ENCODE measurements at regions of chr3 and their contacts with region 1.

Region 1: DNA sequence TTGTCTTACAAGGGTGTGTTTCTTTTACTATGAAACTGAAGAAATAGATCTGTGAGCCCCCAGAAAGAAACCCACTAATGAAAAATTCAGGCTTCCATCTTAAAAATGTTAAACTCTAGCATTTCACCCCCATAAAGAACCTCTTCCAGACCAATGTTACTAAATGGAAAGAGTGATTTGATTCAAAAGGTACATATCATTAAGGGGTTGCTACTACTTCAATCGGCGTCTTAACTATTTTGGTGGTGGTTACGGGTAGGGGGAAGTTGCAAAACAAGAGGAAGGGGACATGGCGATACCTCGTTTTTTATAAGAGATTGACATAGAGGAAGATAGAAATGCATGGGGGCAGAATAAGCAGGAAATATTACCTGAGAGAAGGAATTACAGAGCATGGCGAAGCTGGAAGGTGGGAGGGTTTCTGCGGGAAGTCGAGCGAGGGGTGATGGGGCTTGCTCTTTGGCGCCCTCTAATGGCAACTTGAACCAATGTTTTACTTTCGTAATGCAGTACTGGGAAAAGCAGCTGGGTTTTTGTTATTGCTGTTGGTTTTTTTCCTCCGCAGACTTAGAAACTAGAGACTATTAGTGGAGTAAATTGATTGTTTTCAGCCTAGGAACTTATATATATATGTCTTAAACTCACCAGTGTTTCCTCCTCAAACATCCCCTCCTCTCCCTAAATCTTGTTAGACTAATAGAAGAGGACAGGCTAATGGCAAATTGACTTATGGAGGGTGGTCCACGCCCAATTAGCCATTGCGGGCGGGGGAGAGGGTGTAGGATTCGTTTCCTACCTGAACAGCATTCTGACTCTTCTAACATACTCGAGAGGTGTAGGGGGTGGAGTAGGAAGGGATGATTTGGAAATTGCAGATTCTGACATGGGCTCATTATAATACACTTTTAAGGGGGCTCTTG is 11.3 kb upstream of the SOX2 start:
- DNase-seq: peak; percentile 21
- ATAC-seq: peak; percentile 83
- H3K4me3 ChIP-seq: no peak overlapping the region
- H3K27ac ChIP-seq: no peak overlapping the region
- H3K4me1 ChIP-seq: no peaks in the 10 kb centered on the region
- H3K27me3 ChIP-seq: peaks cover 10 to 25% of the 10 kb centered on the region in 2 experiments
- CTCF ChIP-seq: peak; percentile 82 to 86 (median 85)
- EP300 ChIP-seq: no peak
- POLR2A ChIP-seq: no peak
- RAD21 ChIP-seq: peak; percentile 49

Region 2: DNA sequence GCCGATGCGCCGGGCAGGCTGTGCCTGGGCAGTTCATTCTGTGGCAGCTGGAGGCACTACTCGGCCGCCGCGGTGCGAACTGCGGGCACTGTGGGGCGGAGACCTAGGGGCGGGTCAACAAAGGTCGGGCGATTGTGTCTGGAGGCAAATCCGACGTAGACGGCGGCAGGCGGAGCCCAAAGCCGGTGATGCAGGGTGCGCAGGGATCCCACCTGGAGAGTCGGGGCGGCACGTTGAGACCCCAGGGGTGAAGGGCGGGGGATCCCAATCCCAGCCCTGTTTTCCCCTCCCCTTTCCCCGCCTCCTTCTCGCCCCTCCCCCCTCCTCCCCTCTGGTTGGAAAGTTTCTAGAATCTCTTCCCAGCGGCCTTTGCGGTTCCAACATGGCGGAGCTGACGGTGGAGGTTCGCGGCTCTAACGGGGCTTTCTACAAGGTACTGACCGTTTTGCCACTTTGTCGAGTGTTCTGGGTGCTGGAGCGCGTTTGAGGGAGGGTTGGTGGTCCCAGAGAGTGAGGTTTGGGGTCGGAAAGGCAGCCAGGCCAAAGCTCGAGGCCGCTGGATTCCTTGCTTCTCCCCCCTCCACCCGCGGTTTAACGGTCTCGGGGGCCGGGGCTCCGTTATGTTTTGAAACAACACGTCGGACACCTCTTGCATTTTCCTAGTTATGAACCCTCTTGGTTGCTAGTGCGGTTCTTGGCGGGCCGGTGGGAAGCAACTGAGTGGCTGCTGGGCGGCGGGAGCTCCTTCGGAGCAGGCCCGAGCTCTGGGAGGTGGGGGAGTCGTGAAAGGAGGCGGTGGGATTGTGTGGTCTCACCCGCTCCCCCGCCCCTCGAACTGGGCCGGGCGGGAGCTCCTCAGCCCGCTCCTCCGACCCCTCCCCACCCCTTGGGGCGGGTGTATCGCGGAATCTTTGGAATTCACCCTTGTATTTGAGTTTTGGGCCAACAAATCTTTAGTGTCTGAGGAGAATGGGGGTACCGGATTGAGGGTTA is 787.8 kb before region 1 on chr3 and contains the start of gene FXR1:
- CTCF ChIA-PET with region 1: no interaction called
- POLR2A ChIA-PET with region 1: no interaction called
- RAD21 ChIA-PET with region 1: no interaction called
- SMC1A ChIA-PET with region 1: no interaction called
- in situ Hi-C with region 1: no loop called
- intact Hi-C with region 1: loop called (anchors 10 kb)
- DNase-seq: peak; percentile 66
- ATAC-seq: peak; percentile 99
- H3K4me3 ChIP-seq: peak within 1 kb of the TSS; percentile 97
- H3K27ac ChIP-seq: peak within 1 kb of the TSS; percentile 97
- H3K4me1 ChIP-seq: no peaks in the 10 kb centered on the region
- H3K27me3 ChIP-seq: no peaks in the 10 kb centered on the region
- CTCF ChIP-seq: peak; percentile 72 to 82 (median 80)
- EP300 ChIP-seq: no peak
- POLR2A ChIP-seq: peak; percentile 89
- RAD21 ChIP-seq: peak; percentile 44
- polyA plus RNA-seq, gene FXR1: 46.0 to 62.9 TPM

Region 3: GRCh38 chr3:181326637-181327223 is 373.7 kb before region 1 on chr3:
- CTCF ChIA-PET with region 1: interaction called, 14 read pairs
- POLR2A ChIA-PET with region 1: no interaction called
- RAD21 ChIA-PET with region 1: interaction called, 12 read pairs
- SMC1A ChIA-PET with region 1: interaction called, 6 read pairs
- in situ Hi-C with region 1: loop called (anchors 10 kb)
- intact Hi-C with region 1: loop called (anchors 1 kb)
- DNase-seq: no peak
- ATAC-seq: peak; percentile 77
- H3K4me3 ChIP-seq: no peak overlapping the region
- H3K27ac ChIP-seq: no peak overlapping the region
- H3K4me1 ChIP-seq: no peaks in the 10 kb centered on the region
- H3K27me3 ChIP-seq: no peaks in the 10 kb centered on the region
- CTCF ChIP-seq: peak; percentile 59 to 65 (median 64)
- EP300 ChIP-seq: no peak
- POLR2A ChIP-seq: no peak
- RAD21 ChIP-seq: peak; percentile 72

Region 4: GRCh38 chr3:181689546-181689945 is 10.9 kb before region 1 on chr3:
- CTCF ChIA-PET with region 1: interaction called, 36 read pairs
- POLR2A ChIA-PET with region 1: no interaction called
- RAD21 ChIA-PET with region 1: no interaction called
- SMC1A ChIA-PET with region 1: interaction called, 3 read pairs
- in situ Hi-C with region 1: no loop called
- intact Hi-C with region 1: no loop called
- DNase-seq: no peak
- ATAC-seq: no peak
- H3K4me3 ChIP-seq: no peak overlapping the region
- H3K27ac ChIP-seq: no peak overlapping the region
- H3K4me1 ChIP-seq: no peaks in the 10 kb centered on the region
- H3K27me3 ChIP-seq: no peaks in the 10 kb centered on the region
- CTCF ChIP-seq: no peak
- EP300 ChIP-seq: no peak
- POLR2A ChIP-seq: no peak
- RAD21 ChIP-seq: no peak

Region 5: GRCh38 chr3:181773921-181774320 is 73.5 kb after region 1 on chr3:
- CTCF ChIA-PET with region 1: no interaction called
- POLR2A ChIA-PET with region 1: no interaction called
- RAD21 ChIA-PET with region 1: no interaction called
- SMC1A ChIA-PET with region 1: no interaction called
- in situ Hi-C with region 1: no loop called
- intact Hi-C with region 1: no loop called
- DNase-seq: no peak
- ATAC-seq: no peak
- H3K4me3 ChIP-seq: no peak overlapping the region
- H3K27ac ChIP-seq: no peak overlapping the region
- H3K4me1 ChIP-seq: no peaks in the 10 kb centered on the region
- H3K27me3 ChIP-seq: no peaks in the 10 kb centered on the region
- CTCF ChIP-seq: no peak
- EP300 ChIP-seq: no peak
- POLR2A ChIP-seq: no peak
- RAD21 ChIP-seq: no peak

Region 6: DNA sequence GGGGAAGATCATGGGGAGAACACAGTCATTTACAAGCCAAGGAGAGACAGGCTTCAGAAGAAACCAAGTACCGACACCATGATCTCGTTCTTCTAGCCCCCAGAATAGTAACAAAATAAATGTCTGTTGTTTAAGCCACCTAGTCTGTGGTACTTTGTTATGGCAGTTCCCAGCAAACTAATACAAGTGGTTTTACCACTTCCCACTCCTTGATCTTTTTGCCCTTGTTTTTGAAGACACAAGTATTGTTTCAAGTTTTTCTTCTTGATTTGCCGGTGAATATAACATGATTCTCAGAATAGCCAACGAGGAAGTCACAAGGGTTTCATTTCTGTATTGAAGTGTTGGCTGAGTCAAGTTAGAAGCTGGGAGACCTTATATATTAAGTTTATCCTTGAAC is 231.6 kb after region 1 on chr3:
- CTCF ChIA-PET with region 1: no interaction called
- POLR2A ChIA-PET with region 1: no interaction called
- RAD21 ChIA-PET with region 1: no interaction called
- SMC1A ChIA-PET with region 1: no interaction called
- in situ Hi-C with region 1: no loop called
- intact Hi-C with region 1: loop called (anchors 10 kb)
- DNase-seq: peak; percentile 61
- ATAC-seq: peak; percentile 74
- H3K4me3 ChIP-seq: 0 out of 2 replicates have a peak overlapping the region, but pooled peaks have one; percentile 1
- H3K27ac ChIP-seq: peak overlapping the region; percentile 62
- H3K4me1 ChIP-seq: peaks cover 29% of the 10 kb centered on the region
- H3K27me3 ChIP-seq: no peaks in the 10 kb centered on the region
- CTCF ChIP-seq: no peak
- EP300 ChIP-seq: peak in 1 of 2 experiments; percentile 29; a peak in 1 of 4 replicates
- POLR2A ChIP-seq: no peak
- RAD21 ChIP-seq: no peak

Region 7: GRCh38 chr3:182136088-182136487 is 435.7 kb after region 1 on chr3:
- CTCF ChIA-PET with region 1: no interaction called
- POLR2A ChIA-PET with region 1: no interaction called
- RAD21 ChIA-PET with region 1: no interaction called
- SMC1A ChIA-PET with region 1: no interaction called
- in situ Hi-C with region 1: no loop called
- intact Hi-C with region 1: no loop called
- DNase-seq: no peak
- ATAC-seq: no peak
- H3K4me3 ChIP-seq: no peak overlapping the region
- H3K27ac ChIP-seq: no peak overlapping the region
- H3K4me1 ChIP-seq: no peaks in the 10 kb centered on the region
- H3K27me3 ChIP-seq: no peaks in the 10 kb centered on the region; a peak in 2 of 4 replicates
- CTCF ChIP-seq: no peak
- EP300 ChIP-seq: no peak
- POLR2A ChIP-seq: no peak
- RAD21 ChIP-seq: no peak